Motor neuron (in vitro differentiated cells): ENCODE measurements at regions of chr6 and their contacts with region 1.

Region 1: DNA sequence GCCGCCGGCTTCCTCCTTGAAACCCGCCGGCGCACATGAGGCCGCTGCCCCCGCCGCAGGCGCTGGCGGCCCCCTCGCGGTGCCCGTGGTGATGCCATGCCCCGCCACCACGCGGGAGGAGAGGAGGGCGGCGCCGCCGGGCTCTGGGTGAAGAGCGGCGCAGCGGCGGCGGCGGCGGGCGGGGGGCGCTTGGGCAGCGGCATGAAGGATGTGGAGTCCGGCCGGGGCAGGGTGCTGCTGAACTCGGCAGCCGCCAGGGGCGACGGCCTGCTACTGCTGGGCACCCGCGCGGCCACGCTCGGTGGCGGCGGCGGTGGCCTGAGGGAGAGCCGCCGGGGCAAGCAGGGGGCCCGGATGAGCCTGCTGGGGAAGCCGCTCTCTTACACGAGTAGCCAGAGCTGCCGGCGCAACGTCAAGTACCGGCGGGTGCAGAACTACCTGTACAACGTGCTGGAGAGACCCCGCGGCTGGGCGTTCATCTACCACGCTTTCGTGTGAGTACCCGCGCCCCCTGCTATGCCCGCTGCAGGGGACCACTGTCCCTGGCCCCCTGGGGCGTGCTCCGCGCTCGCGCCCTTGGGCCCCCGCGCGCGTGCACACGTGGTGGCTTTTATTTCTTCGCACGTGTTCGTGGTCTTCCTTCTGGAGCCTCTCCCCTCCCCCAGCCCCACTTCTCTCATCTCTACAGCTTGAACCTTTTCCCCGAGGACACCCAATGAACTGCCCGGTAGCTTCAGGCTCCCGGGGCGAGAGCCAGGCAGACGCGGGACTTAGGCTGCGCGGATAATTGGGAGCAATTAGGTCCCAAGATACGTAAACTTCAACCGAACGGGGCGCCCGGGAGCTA is 453 bp downstream of the KCNQ5 start:
- ATAC-seq: peak; percentile 26 to 77 (median 57)
- H3K4me3 ChIP-seq: peak overlapping the region; percentile 36 to 48 (median 40)
- H3K27ac ChIP-seq: no peak overlapping the region
- H3K4me1 ChIP-seq: peaks cover 9 to 10% of the 10 kb centered on the region in 2 donors

Region 2: DNA sequence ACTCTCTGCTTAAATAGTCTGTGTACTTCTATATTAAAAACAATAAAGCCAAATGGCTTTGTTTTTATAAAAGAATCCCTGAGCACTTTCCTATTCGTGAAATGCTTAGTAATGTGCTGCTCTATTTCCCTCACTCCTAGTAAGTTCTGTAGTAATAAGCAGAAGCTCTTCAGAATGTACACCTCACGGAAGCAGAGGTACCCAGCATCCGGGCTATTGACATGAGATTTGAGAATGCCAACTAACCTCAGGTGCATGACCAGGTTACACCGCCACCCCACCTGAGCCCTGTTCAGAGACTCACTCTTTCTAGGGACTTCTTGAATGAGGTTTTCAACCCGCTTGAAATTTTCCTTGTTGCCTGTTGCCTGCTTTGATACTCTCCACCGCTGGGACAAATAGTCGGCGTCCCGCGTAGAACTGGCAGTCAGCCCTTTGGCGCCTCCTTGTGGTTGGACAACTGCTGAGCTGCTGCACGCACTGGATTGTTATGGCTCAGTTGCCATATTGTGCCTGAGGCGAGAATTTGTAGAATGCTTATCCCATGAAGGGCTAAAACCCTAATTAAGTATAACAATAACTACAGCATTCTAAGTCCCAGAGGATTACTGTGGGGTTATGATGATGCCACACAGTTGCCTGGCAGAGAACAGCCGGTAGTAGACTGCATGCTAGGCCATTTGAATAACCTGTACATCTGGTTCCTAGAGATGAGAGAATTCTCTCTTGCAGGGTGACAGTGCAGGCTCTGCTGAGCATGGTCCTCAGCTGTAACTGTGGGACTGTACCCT is 507.5 kb after region 1 on chr6:
- in situ Hi-C with region 1: loop called in 2 of 9 experiments (anchors 25 kb)
- ATAC-seq: peak; percentile 63 to 98 (median 87)
- H3K4me3 ChIP-seq: no peak overlapping the region
- H3K27ac ChIP-seq: no peak overlapping the region
- H3K4me1 ChIP-seq: peaks cover 0 to 15% of the 10 kb centered on the region in 2 donors

Region 3: GRCh38 chr6:73152966-73153757 is 530.8 kb after region 1 on chr6:
- in situ Hi-C with region 1: loop called in 3 of 9 experiments (anchors 25 kb)
- ATAC-seq: no peak
- H3K4me3 ChIP-seq: no peak overlapping the region
- H3K27ac ChIP-seq: no peak overlapping the region
- H3K4me1 ChIP-seq: no peaks in the 10 kb centered on the region